ENCODE measurements at regions of chr11 and their contacts with region 1.

Region 1: GRCh38 chr11:5712507-5712906 is 22.9 kb downstream of the TRIM22 start:
- DNase-seq: no peak
- H3K4me3 ChIP-seq: no peak overlapping the region
- H3K27ac ChIP-seq: no peak overlapping the region
- H3K4me1 ChIP-seq: no peaks in the 10 kb centered on the region
- H3K27me3 ChIP-seq: no peaks in the 10 kb centered on the region
- CTCF ChIP-seq: peak; percentile 58 to 60

Region 2: DNA sequence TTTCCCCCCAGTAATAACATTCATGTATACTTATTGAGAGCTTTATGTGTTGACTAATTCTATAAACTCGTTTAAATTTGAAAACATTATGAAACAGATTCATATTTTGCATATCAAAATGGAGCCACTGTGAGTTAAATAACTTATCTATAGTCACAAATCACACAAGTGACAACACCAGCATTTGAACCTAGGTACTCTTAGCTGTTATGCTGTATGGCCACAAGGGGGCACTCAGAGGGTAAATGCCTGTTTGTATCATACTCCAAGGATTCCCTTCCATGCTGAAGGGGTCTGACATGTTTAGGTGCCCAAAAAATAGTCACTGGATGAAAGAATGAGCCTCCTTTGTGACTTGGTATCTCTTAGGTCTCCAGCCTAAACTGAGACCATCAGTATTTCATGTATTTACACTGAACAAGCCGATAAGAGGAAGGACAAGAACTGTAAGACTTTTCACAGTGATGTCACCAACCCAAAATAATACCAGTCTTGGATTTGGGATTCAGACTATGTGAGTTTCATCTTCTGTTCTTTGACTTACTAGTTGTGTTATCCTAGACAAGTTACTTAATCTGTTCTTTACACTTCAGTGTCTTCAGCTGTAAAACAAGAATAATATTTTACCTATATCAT is 236.2 kb before region 1 on chr11:
- CTCF ChIA-PET with region 1: no interaction called
- dilution Hi-C with region 1: no loop called
- in situ Hi-C with region 1: no loop called
- intact Hi-C with region 1: loop called (anchors 1 kb)
- DNase-seq: peak; percentile 27
- H3K4me3 ChIP-seq: no peak overlapping the region
- H3K27ac ChIP-seq: no peak overlapping the region
- H3K4me1 ChIP-seq: no peaks in the 10 kb centered on the region
- H3K27me3 ChIP-seq: peaks cover 3% of the 10 kb centered on the region
- CTCF ChIP-seq: peak; percentile 86 to 89

Region 3: DNA sequence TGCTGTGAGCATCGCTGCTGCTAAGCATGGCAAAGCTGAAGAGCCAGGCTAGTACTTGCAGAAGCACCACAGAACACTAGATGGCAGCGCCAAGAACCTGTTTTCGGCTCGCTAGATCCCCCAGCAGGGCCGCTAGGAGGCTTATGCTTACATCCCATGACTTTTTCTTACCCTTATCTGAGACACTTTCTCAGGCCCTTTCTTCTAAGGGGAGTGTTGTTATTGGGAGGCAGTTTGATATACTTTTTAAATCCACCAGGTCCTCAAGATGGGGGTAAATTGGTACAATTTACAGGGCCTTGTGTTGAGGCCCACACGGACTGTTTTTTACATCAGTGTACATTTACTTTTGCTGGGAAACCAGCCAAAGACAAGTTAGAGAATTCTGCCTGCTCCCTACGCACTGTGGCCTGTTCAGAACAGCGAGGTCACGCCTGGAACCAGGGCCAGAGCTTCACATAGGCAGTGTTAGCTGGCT is 112.1 kb before region 1 on chr11:
- CTCF ChIA-PET with region 1: no interaction called
- dilution Hi-C with region 1: no loop called
- in situ Hi-C with region 1: no loop called
- intact Hi-C with region 1: loop called (anchors 1 kb)
- DNase-seq: no peak
- H3K4me3 ChIP-seq: no peak overlapping the region
- H3K27ac ChIP-seq: no peak overlapping the region
- H3K4me1 ChIP-seq: peaks cover 5% of the 10 kb centered on the region
- H3K27me3 ChIP-seq: no peaks in the 10 kb centered on the region
- CTCF ChIP-seq: peak; percentile 77 to 86

Region 4: GRCh38 chr11:5737091-5737490 is 24.6 kb after region 1 on chr11:
- CTCF ChIA-PET with region 1: no interaction called
- dilution Hi-C with region 1: no loop called
- in situ Hi-C with region 1: no loop called
- intact Hi-C with region 1: no loop called
- DNase-seq: no peak
- H3K4me3 ChIP-seq: no peak overlapping the region
- H3K27ac ChIP-seq: no peak overlapping the region
- H3K4me1 ChIP-seq: no peaks in the 10 kb centered on the region
- H3K27me3 ChIP-seq: no peaks in the 10 kb centered on the region
- CTCF ChIP-seq: no peak

Measured in mammary epithelial cell (primary cell).